ENCODE measurements at regions of chr1 and their contacts with region 1.

Region 1: DNA sequence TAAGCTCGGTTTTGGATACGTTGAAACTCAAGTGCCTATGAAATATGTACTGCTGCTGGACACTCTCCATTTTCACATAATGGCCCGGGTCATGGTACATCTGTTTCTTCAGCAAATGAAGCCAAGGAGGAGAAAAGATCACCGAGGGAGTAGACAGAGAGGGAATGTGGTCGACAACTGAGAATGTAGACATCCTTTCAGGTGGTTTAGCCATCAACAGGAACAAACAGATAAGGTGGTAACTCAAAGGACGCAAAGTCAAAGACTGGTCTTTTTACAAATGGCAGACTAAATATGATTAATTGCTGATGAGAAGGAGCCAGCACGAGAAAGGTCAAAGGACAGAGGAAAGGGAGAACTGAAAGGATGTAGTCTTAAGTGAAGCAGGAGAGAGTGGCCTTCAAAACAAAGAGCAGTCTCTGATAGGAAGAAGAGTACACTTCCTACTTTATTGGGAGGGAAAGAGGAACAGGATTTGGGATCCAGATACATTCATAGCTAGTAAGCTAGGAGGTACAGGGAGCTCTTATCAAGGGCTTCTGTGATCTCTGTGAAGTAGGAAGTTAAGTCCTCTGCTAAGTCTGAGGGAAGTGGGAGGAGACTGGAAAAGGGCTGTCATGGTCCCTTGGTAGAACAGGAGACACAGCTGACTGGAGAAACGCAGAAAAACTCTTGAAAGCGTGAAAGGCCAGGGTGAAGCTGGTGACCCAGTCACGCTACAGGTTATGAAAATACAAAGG is 28.3 kb downstream of the NUP133 start:
- DNase-seq: peak; percentile 87
- ATAC-seq: peak; percentile 79
- H3K4me3 ChIP-seq: peak overlapping the region in 1 of 5 experiments; percentile 48
- H3K4me3 Mint-ChIP-seq: peak overlapping the region; percentile 64
- H3K27ac ChIP-seq: peak overlapping the region; percentile 78 to 85
- H3K27ac Mint-ChIP-seq: peak overlapping the region; percentile 91
- H3K4me1 ChIP-seq: peaks cover 40 to 41% of the 10 kb centered on the region in 2 donors
- H3K4me1 Mint-ChIP-seq: peaks cover 45% of the 10 kb centered on the region
- H3K27me3 ChIP-seq: no peaks in the 10 kb centered on the region
- H3K27me3 Mint-ChIP-seq: no peaks in the 10 kb centered on the region
- CTCF ChIP-seq: no peak

Region 2: DNA sequence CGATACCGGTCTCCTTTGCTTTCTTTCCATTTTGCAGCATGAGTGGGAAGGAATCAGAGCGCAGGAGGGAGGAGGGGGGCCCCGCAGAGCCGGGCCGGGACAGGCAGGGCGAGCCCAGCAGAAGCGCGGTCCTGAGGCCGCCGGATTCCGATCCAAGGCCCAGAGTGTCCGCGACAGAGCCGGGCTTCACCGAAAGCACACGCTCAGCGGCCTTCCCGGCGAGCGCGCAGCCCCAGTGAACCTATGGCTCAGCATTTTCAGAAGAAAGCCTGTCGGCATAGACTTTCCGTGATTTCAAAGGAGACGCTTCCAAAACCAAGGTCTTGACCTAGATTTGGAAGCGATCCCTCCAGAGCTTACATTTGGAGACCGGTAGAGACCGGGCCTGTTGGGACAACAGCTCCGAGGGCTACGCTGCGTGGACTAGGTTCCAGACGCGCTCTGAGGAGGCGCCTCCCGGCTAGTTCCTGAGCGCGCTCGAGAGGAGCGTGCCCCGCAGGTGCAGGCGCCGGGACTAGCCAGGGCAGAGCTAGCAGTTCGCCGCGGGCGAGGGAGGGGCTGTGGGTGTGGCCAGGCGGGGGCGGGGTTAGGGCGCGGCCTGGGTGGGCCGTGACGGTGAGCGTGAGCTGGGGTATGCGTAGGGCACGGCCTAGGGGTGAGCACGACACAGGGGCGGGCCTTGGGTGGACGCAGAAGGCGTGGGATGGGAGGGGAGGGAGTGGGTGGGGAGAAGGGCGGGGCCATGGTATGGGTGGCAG is 1692.1 kb before region 1 on chr1:
- CTCF ChIA-PET with region 1: no interaction called
- POLR2A ChIA-PET with region 1: no interaction called
- intact Hi-C with region 1: loop called (anchors 5 kb)
- DNase-seq: peak; percentile 97
- ATAC-seq: peak; percentile 92
- H3K4me3 ChIP-seq: peak overlapping the region; percentile 39 to 79 (median 76)
- H3K4me3 Mint-ChIP-seq: peak overlapping the region; percentile 91
- H3K27ac ChIP-seq: peak overlapping the region; percentile 27 to 57
- H3K27ac Mint-ChIP-seq: peak overlapping the region; percentile 68
- H3K4me1 ChIP-seq: peaks cover 26 to 35% of the 10 kb centered on the region in 2 donors
- H3K4me1 Mint-ChIP-seq: peaks cover 19% of the 10 kb centered on the region
- H3K27me3 ChIP-seq: no peaks in the 10 kb centered on the region
- H3K27me3 Mint-ChIP-seq: no peaks in the 10 kb centered on the region
- CTCF ChIP-seq: no peak

Region 3: GRCh38 chr1:229258031-229258756 is 221.6 kb before region 1 on chr1:
- CTCF ChIA-PET with region 1: interaction called, 313 read pairs
- POLR2A ChIA-PET with region 1: no interaction called
- intact Hi-C with region 1: loop called (anchors 1 kb)
- DNase-seq: peak; percentile 77
- ATAC-seq: peak; percentile 76
- H3K4me3 ChIP-seq: no peak overlapping the region
- H3K4me3 Mint-ChIP-seq: no peak overlapping the region
- H3K27ac ChIP-seq: no peak overlapping the region
- H3K27ac Mint-ChIP-seq: no peak overlapping the region
- H3K4me1 ChIP-seq: peaks cover 10 to 16% of the 10 kb centered on the region in 2 donors
- H3K4me1 Mint-ChIP-seq: peaks cover 13% of the 10 kb centered on the region
- H3K27me3 ChIP-seq: no peaks in the 10 kb centered on the region
- H3K27me3 Mint-ChIP-seq: peaks cover 3% of the 10 kb centered on the region
- CTCF ChIP-seq: peak; percentile 94

Region 4: DNA sequence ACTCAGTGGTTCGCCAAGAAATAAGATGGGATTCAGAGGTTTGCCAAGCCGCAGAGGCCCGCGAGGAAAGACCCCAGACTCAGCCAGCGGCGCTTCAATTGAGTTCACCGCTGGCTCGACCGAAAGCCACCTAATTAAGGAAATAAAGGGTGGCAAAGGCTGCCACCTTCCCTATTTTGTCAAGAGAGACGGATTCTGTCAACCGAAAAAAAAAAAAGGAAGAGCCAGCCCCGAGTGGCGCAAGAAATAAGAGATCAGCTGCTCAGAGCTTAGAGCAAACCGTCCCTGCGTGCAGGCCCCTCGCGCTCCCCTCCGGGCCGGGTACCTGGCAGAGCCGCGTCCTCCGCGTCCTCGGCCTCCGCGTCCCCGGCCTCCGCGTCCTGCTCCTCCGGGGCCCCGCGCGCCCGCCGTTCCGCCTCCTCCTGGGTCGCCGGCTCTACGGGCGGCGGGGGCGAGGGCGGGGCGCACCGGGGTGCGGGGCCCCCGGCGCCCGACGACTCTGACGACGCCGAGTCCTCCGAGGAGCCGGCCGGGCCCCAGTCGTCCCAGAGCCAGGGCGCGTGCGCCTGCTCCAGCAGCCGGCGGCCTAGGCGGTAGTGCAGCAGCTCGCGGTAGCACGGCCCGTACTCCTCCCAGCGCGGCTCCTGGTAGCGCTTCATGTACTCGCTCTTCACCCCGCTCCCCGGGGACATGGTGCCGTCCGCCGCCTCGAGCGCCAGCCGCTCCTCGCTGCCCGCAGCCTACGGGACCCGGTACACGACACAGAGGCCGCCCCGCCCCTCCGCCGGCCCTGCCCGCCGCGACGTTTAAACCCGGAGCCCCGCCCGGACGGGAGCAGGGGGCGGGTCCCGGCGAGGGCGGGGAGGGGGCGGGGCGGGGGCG is 137.8 kb before region 1 on chr1:
- CTCF ChIA-PET with region 1: interaction called, 6 read pairs
- POLR2A ChIA-PET with region 1: interaction called, 4 read pairs
- intact Hi-C with region 1: loop called (anchors 1 kb)
- DNase-seq: peak; percentile 91
- ATAC-seq: peak; percentile 82
- H3K4me3 ChIP-seq: peak overlapping the region; percentile 66 to 86 (median 80)
- H3K4me3 Mint-ChIP-seq: peak overlapping the region; percentile 88
- H3K27ac ChIP-seq: peak overlapping the region; percentile 24 to 79
- H3K27ac Mint-ChIP-seq: peak overlapping the region; percentile 90
- H3K4me1 ChIP-seq: peaks cover 21 to 23% of the 10 kb centered on the region in 2 donors
- H3K4me1 Mint-ChIP-seq: peaks cover 42% of the 10 kb centered on the region
- H3K27me3 ChIP-seq: peaks cover 0 to 12% (median 3%) of the 10 kb centered on the region in 4 experiments
- H3K27me3 Mint-ChIP-seq: peaks cover 20% of the 10 kb centered on the region
- CTCF ChIP-seq: no peak

Region 5: DNA sequence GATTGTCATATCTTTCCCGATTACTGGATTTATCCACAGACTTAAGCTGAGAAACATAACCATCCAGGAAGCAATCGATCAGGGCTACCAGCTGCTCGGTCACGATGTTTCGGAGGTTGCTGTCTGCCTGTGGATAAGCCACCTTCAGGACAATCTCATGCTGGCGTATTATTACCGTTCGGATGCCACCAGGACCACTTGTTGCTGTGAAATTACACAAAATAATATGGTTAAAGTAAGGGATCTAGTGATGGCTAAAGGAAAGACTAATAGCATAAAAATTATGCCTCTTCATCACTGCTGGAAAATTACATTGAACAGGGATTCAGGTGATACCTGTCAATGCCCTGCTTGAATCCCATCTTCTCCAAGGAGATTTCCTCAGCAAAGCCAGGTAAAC is 15.2 kb before region 1 on chr1:
- CTCF ChIA-PET with region 1: interaction called, 47 read pairs
- POLR2A ChIA-PET with region 1: no interaction called
- intact Hi-C with region 1: no loop called
- DNase-seq: no peak
- ATAC-seq: no peak
- H3K4me3 ChIP-seq: no peak overlapping the region
- H3K4me3 Mint-ChIP-seq: no peak overlapping the region
- H3K27ac ChIP-seq: no peak overlapping the region
- H3K27ac Mint-ChIP-seq: no peak overlapping the region
- H3K4me1 ChIP-seq: no peaks in the 10 kb centered on the region
- H3K4me1 Mint-ChIP-seq: peaks cover 4% of the 10 kb centered on the region
- H3K27me3 ChIP-seq: no peaks in the 10 kb centered on the region
- H3K27me3 Mint-ChIP-seq: no peaks in the 10 kb centered on the region
- CTCF ChIP-seq: no peak

Region 6: DNA sequence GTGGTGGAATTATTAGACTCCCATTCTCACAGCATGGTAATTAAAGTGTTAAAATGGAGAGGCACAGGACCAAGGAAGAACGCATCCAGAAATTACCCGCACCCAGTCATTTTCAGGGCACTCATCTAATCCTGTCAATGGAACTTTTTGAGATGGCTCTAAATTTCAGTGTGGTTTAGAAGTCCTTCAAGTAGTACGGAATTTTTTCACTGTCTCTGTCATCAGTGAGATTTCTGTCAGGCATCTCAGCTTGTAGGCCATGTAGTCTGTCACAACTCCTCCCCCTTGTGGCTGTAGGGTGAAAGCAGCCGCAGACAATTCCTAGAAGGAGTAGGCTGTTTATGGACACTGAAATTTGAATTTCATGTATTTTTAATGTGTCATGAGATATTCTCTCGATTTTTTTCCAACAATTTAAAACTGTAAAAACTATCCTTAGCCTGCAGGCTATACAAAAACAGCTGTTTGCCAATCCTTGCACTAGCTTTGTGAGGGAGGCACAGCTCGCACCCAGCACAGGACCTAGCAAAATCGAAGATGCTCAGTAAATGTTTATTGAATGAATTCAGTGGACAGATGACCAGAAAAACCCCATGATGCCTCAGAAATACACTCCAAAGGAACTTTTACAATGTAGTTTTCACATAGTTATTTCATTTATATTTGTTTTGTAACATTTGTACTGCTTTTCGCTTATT is 34.9 kb after region 1 on chr1:
- CTCF ChIA-PET with region 1: interaction called, 35 read pairs
- POLR2A ChIA-PET with region 1: interaction called, 3 read pairs
- intact Hi-C with region 1: loop called (anchors 1 kb)
- DNase-seq: peak; percentile 76
- ATAC-seq: peak; percentile 85
- H3K4me3 ChIP-seq: no peak overlapping the region
- H3K4me3 Mint-ChIP-seq: no peak overlapping the region
- H3K27ac ChIP-seq: no peak overlapping the region
- H3K27ac Mint-ChIP-seq: no peak overlapping the region
- H3K4me1 ChIP-seq: peaks cover 0 to 4% of the 10 kb centered on the region in 2 donors
- H3K4me1 Mint-ChIP-seq: peaks cover 2% of the 10 kb centered on the region
- H3K27me3 ChIP-seq: no peaks in the 10 kb centered on the region
- H3K27me3 Mint-ChIP-seq: no peaks in the 10 kb centered on the region
- CTCF ChIP-seq: peak; percentile 84